ENCODE measurements at regions of chr3 and their contacts with region 1.

Region 1: DNA sequence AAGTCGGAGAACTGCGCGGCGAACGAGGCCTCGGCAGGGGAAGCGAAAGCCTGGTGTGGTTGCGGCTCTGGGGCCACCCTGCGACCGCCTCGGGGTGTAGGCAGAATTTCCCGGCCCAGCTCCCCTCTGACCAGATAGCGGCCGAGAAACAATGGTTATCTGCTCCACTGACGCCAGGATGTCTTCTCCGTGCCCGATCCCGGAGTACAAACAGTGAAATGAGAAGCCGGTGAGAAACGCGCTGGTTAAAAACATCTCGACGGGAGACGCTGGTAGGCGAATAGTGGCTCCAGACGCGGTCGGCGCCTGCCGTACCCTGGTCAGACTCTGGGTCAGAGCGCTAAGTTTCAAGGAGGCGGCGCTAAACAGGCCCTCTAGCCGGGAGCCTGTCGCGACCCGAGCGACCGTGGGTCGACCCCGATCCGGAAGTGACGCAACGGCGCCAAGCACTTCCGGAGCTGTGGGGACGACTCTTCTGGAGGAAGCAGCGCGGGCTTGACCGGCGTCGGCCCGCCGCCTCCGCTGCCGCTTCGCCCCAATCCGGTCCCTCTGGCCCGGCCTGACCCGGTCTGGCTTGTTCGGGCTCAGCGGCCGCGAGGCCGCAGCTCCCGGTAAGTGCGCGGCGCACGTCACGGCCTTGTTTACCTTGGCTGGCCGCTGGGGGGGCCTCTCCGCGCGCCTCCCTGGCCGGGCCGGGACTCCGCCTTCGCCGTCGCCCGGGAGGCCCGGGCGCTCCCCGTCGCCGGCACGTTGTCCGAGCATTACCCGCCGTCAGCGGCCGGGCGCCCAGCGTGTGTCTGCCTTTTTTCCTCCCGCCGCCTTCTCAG is at the start of gene ARIH2:
- DNase-seq: peak; percentile 96
- ATAC-seq: peak; percentile 81
- H3K4me3 ChIP-seq: peak within 1 kb of the TSS; percentile 76 to 94 (median 83)
- H3K4me3 Mint-ChIP-seq: peak within 1 kb of the TSS; percentile 99
- H3K27ac ChIP-seq: peak within 1 kb of the TSS; percentile 96 to 99
- H3K27ac Mint-ChIP-seq: peak within 1 kb of the TSS; percentile 99
- H3K4me1 ChIP-seq: peaks cover 14 to 27% of the 10 kb centered on the region in 2 donors
- H3K4me1 Mint-ChIP-seq: peaks cover 27% of the 10 kb centered on the region
- H3K27me3 ChIP-seq: no peaks in the 10 kb centered on the region
- H3K27me3 Mint-ChIP-seq: no peaks in the 10 kb centered on the region
- CTCF ChIP-seq: peak; percentile 49
- total RNA-seq, gene ARIH2: 148 and 162 TPM in 2 replicates

Region 2: GRCh38 chr3:48739955-48740823 is 178.4 kb before region 1 on chr3:
- CTCF ChIA-PET with region 1: interaction called, 4 read pairs
- POLR2A ChIA-PET with region 1: no interaction called
- intact Hi-C with region 1: loop called (anchors 2 kb)
- DNase-seq: peak; percentile 67
- ATAC-seq: peak; percentile 90
- H3K4me3 ChIP-seq: no peak overlapping the region
- H3K4me3 Mint-ChIP-seq: no peak overlapping the region
- H3K27ac ChIP-seq: no peak overlapping the region
- H3K27ac Mint-ChIP-seq: no peak overlapping the region
- H3K4me1 ChIP-seq: peaks cover 0 to 8% of the 10 kb centered on the region in 2 donors
- H3K4me1 Mint-ChIP-seq: peaks cover 13% of the 10 kb centered on the region
- H3K27me3 ChIP-seq: no peaks in the 10 kb centered on the region
- H3K27me3 Mint-ChIP-seq: no peaks in the 10 kb centered on the region
- CTCF ChIP-seq: peak; percentile 77

Region 3: DNA sequence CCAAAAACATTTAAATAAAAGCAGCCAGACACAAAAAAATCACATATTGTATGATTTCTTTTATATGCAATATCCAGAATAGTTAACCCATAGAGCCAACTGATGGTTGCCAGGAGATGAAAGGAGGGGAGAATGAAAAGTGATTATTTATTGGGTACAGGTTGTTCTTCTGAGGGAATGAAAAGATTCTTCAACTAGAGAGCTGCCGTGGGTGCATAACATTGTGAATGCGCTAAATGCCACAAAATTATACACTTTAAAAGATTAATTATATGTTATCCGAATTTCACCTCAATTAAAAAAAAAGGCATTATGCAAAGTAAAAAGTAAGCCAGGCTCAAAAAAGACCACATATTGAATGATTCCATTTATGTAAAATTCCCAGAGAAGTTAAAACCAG is 107.1 kb before region 1 on chr3:
- CTCF ChIA-PET with region 1: no interaction called
- POLR2A ChIA-PET with region 1: no interaction called
- intact Hi-C with region 1: no loop called
- DNase-seq: no peak
- ATAC-seq: no peak
- H3K4me3 ChIP-seq: no peak overlapping the region
- H3K4me3 Mint-ChIP-seq: no peak overlapping the region
- H3K27ac ChIP-seq: no peak overlapping the region
- H3K27ac Mint-ChIP-seq: no peak overlapping the region
- H3K4me1 ChIP-seq: peaks cover 3 to 10% of the 10 kb centered on the region in 2 donors
- H3K4me1 Mint-ChIP-seq: peaks cover 25% of the 10 kb centered on the region
- H3K27me3 ChIP-seq: no peaks in the 10 kb centered on the region
- H3K27me3 Mint-ChIP-seq: no peaks in the 10 kb centered on the region
- CTCF ChIP-seq: no peak

Region 4: DNA sequence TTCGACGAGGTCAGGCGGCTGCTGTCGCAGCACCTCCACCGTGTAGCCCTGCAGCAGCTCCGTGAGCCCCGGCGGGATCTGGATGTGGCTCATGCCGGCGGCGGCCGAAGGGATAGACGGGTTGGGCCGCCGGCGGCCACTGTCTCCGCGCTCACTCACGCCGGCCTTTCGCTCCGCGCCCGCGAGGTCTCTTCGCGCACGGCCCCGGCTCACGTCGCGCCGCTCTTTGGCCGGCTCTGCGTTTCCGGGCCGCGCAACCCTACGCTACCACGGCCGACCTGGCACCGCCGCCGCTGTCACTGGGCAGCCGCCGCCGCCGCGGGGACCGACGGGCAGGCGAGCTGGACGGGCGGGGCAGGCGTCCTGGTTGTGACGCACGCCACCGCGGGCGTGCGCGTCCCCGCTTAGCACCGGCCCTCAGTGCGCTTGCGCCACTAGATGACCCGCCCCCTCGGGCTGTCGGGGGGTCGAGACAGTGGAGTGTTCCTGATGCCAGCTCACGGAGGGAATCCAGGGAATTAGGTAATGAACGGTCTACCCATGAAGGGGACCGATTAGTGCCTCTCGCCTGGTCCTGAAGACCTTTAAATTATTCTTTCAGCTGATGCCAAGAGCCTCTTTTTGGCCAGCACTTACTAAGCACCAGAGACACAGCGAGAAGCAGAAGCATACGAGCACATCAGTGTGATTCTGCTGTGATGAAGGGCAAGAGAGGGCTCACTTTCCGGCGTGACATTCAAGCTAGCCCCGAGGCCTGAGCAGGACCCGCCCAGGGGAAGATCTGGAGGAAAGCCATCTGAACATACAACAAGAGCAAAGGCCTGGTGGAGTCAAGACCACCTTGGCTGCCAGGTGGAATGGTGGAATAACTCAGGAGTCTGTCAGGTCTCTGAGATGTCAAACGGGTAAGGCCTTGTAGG is 70.8 kb before region 1 on chr3 and contains the start of gene PRKAR2A:
- CTCF ChIA-PET with region 1: interaction called, 3 read pairs
- POLR2A ChIA-PET with region 1: interaction called, 10 read pairs
- intact Hi-C with region 1: loop called (anchors 1 kb)
- DNase-seq: peak; percentile 93
- ATAC-seq: peak; percentile 95
- H3K4me3 ChIP-seq: peak within 1 kb of the TSS; percentile 67 to 88 (median 80)
- H3K4me3 Mint-ChIP-seq: peak within 1 kb of the TSS; percentile 96
- H3K27ac ChIP-seq: peak within 1 kb of the TSS; percentile 68 to 89
- H3K27ac Mint-ChIP-seq: peak within 1 kb of the TSS; percentile 96
- H3K4me1 ChIP-seq: peaks cover 16 to 25% of the 10 kb centered on the region in 2 donors
- H3K4me1 Mint-ChIP-seq: peaks cover 28% of the 10 kb centered on the region
- H3K27me3 ChIP-seq: no peaks in the 10 kb centered on the region
- H3K27me3 Mint-ChIP-seq: no peaks in the 10 kb centered on the region
- CTCF ChIP-seq: no peak
- total RNA-seq, gene PRKAR2A: 25.0 and 27.5 TPM in 2 replicates

Region 5: DNA sequence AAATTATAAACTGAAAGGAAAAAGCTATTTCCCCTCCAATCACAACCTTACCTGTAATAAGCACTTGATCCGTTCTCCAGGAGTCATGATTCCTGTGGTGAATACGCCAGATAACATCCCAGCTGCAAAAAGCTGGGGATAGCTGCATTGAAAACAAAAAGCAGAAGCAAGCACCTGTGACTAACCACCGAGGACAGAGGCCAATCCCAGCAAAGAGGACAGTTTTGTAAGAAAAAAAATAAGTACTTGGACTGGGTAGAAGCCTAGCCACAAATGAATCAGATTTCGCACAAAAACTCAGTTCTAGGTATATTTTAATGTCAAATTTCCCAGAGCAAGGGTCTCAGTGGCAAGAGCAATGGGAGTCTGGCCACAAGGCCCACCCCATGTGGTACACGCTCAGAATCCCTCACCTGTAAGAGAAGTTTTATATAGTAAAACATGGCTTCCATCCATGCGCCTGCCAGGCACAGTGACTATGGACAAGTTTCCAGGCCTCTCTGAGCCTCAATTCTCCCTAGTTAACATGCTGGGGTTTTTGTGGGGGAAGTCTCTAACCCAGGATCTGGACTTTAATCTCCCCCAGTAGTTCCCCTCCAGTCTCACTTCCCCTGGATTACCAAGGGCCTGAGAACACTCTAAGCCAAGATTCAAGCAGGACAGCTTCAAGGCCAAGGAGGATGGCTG is 39.2 kb before region 1 on chr3:
- CTCF ChIA-PET with region 1: no interaction called
- POLR2A ChIA-PET with region 1: no interaction called
- intact Hi-C with region 1: no loop called
- DNase-seq: no peak
- ATAC-seq: no peak
- H3K4me3 ChIP-seq: no peak overlapping the region
- H3K4me3 Mint-ChIP-seq: no peak overlapping the region
- H3K27ac ChIP-seq: no peak overlapping the region
- H3K27ac Mint-ChIP-seq: no peak overlapping the region
- H3K4me1 ChIP-seq: no peaks in the 10 kb centered on the region
- H3K4me1 Mint-ChIP-seq: peaks cover 7% of the 10 kb centered on the region
- H3K27me3 ChIP-seq: no peaks in the 10 kb centered on the region
- H3K27me3 Mint-ChIP-seq: no peaks in the 10 kb centered on the region
- CTCF ChIP-seq: no peak

Region 6: DNA sequence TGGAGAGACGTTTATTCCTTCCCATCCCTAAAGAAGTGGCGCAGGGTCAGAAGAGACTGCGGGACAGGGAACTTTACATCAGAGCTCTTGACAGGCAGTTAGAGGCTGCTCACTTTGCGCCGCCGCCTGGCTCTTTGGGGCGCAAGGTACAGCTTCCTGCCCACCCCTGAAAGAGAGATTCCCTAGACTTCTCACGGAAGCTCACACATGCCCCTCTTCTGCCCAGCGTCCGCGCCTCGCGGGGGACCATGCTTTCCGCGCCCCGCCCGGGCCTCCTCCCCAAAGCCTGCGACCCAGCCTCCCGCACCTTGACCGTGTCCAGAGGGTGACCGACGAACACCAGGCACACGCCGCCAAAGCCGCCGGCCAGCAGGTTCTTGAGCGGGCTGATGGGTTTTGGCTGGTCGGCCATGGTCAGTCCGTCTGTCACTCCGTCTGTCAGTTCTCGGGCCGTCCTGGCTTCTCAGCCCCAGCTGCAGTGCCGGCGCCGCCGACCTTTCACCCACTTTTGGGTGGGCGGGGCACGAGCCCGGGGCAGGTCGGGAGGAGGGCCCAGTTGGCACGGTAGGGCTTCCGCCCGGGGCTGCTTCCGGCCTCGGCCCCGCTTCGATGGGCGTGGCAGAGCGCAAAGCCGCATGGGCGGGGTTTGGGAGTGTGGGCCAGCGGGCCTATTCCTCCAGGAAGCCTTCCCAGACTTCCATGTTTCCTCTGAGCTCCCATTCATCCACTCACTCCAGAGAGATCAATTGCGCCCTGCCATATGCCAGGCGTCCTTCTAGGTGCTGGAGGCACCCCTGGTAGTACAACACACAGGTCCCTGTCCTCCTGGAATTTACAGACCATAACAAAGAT is 20.0 kb before region 1 on chr3 and contains the start of gene SLC25A20:
- CTCF ChIA-PET with region 1: interaction called, 8 read pairs
- POLR2A ChIA-PET with region 1: interaction called, 21 read pairs
- intact Hi-C with region 1: loop called (anchors 1 kb)
- DNase-seq: peak; percentile 88
- ATAC-seq: peak; percentile 99
- H3K4me3 ChIP-seq: peak within 1 kb of the TSS; percentile 24 to 86 (median 73)
- H3K4me3 Mint-ChIP-seq: peak within 1 kb of the TSS; percentile 95
- H3K27ac ChIP-seq: peak within 1 kb of the TSS; percentile 30 to 80
- H3K27ac Mint-ChIP-seq: peak within 1 kb of the TSS; percentile 83
- H3K4me1 ChIP-seq: peaks cover 24 to 29% of the 10 kb centered on the region in 2 donors
- H3K4me1 Mint-ChIP-seq: peaks cover 35% of the 10 kb centered on the region
- H3K27me3 ChIP-seq: no peaks in the 10 kb centered on the region
- H3K27me3 Mint-ChIP-seq: no peaks in the 10 kb centered on the region
- CTCF ChIP-seq: no peak
- total RNA-seq, gene SLC25A20: 11.6 and 12.2 TPM in 2 replicates

Region 7: DNA sequence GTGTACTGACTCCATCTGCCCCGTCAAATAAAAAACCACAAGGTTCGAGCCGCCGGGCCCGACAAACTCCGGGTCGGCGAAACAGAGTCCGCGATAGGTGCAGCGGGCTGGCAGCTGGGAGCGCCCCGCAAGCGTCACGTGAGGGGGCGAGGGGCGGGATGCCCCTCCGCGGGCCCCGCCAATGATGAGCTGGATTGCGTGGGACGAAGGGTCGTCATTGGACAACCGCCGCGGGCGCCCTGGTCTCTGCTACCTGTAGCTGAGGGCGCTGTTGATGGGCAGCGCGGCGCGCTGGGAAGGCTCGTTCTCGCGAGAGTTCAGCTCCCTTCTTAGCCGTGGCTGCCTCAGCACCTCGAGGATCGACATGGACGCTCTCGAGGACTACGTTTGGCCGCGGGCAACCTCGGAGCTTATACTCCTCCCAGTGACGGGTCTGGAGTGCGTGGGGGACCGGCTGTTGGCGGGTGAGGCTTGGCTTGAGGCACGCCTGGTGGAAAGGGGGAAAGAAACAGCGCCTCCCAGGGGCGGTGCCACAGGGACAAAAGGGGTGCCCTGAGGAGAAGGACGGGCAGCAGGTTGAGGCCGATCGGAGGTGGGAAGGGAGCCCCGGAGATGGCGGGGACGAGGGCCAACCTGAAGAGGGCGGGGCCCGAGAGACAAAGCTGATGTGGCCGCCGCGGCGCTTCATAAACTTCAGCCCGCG is 88.6 kb after region 1 on chr3 and contains the start of gene WDR6:
- CTCF ChIA-PET with region 1: interaction called, 6 read pairs
- POLR2A ChIA-PET with region 1: interaction called, 10 read pairs
- intact Hi-C with region 1: loop called (anchors 1 kb)
- DNase-seq: peak; percentile 98
- ATAC-seq: peak; percentile 86
- H3K4me3 ChIP-seq: peak within 1 kb of the TSS; percentile 69 to 99 (median 94)
- H3K4me3 Mint-ChIP-seq: peak within 1 kb of the TSS; percentile 100
- H3K27ac ChIP-seq: peak within 1 kb of the TSS; percentile 95 to 96
- H3K27ac Mint-ChIP-seq: peak within 1 kb of the TSS; percentile 99
- H3K4me1 ChIP-seq: peaks cover 15 to 18% of the 10 kb centered on the region in 2 donors
- H3K4me1 Mint-ChIP-seq: peaks cover 27% of the 10 kb centered on the region
- H3K27me3 ChIP-seq: no peaks in the 10 kb centered on the region
- H3K27me3 Mint-ChIP-seq: no peaks in the 10 kb centered on the region
- CTCF ChIP-seq: peak; percentile 52
- total RNA-seq, gene WDR6: 270 and 287 TPM in 2 replicates

Region 8: GRCh38 chr3:49021813-49022687 is 103.4 kb after region 1 on chr3 and contains the start of gene NDUFAF3:
- CTCF ChIA-PET with region 1: interaction called, 4 read pairs
- POLR2A ChIA-PET with region 1: interaction called, 9 read pairs
- intact Hi-C with region 1: loop called (anchors 2 kb)
- DNase-seq: peak; percentile 96
- ATAC-seq: peak; percentile 66
- H3K4me3 ChIP-seq: peak within 1 kb of the TSS; percentile 66 to 92 (median 89)
- H3K4me3 Mint-ChIP-seq: peak within 1 kb of the TSS; percentile 96
- H3K27ac ChIP-seq: peak within 1 kb of the TSS; percentile 96 to 98
- H3K27ac Mint-ChIP-seq: peak within 1 kb of the TSS; percentile 97
- H3K4me1 ChIP-seq: peaks cover 36 to 60% of the 10 kb centered on the region in 2 donors
- H3K4me1 Mint-ChIP-seq: peaks cover 65% of the 10 kb centered on the region
- H3K27me3 ChIP-seq: no peaks in the 10 kb centered on the region
- H3K27me3 Mint-ChIP-seq: no peaks in the 10 kb centered on the region
- CTCF ChIP-seq: peak; percentile 95
- total RNA-seq, gene NDUFAF3: 67.0 and 67.5 TPM in 2 replicates